ENCODE measurements at regions of chr10 and their contacts with region 1.

Region 1: GRCh38 chr10:28326516-28327490 is 23.9 kb upstream of the MPP7 start:
- DNase-seq: no peak
- H3K4me3 ChIP-seq: no peak overlapping the region
- H3K27ac ChIP-seq: no peak overlapping the region
- H3K4me1 ChIP-seq: peaks cover 0 to 38% (median 19%) of the 10 kb centered on the region in 6 donors
- H3K27me3 ChIP-seq: no peaks in the 10 kb centered on the region
- CTCF ChIP-seq: no peak
- POLR2A ChIP-seq: no peak

Region 2: DNA sequence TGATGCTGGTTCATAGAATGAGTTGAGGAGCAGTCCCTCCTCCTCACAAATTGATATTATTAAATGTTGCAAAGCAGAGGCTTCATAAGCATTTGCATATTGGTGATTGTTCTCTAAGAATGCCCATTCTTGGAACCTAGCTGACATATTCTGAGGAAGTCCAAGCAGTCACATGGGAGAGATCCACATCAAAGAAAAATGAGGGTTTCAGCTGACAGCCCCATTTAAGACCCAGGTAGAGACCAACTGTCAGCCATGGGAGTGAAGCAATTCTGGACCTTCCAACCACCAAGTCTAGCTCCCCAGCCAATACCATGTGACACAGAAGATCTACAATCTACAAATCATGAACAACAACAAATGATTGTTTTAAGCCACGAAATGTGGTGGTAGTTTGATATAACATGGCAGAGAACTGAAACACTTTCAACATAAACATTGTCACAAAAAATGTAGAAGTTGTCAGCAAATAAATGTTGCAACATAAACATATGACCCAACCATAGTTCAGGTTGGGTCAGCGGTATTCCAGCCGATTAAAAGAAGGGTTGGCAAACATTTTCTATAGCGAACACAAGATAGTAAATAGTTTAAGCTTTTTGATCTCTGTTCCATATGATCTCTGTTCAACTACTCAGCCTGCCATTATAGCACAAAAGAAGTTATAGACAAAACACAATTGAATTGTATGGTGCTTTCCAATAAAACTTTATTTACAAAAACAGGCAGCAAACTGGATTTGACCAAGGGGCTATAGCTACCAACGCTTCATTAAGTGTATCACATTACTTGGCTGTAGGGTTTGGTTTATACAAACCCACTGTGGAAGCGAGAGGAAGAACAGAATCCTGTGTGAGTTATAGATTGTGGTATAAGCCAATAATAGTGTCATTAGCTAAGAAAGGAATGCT is 17.4 kb after region 1 on chr10:
- intact Hi-C with region 1: loop called (anchors 2 kb)
- DNase-seq: no peak
- H3K4me3 ChIP-seq: no peak overlapping the region
- H3K27ac ChIP-seq: peak overlapping the region in 3 of 8 donors; percentile 42 to 56 (median 53)
- H3K4me1 ChIP-seq: peaks cover 0 to 5% (median 0%) of the 10 kb centered on the region in 6 donors
- H3K27me3 ChIP-seq: no peaks in the 10 kb centered on the region
- CTCF ChIP-seq: no peak
- POLR2A ChIP-seq: no peak